ENCODE measurements at regions of chr3 and their contacts with region 1.

Region 1: GRCh38 chr3:56758539-56758981 is 43.2 kb downstream of the ARHGEF3 start:
- DNase-seq: peak in 1 of 2 donors; percentile 49
- ATAC-seq: peak; percentile 66 to 79 (median 74)
- H3K4me3 ChIP-seq: no peak overlapping the region
- H3K4me3 Mint-ChIP-seq: peak overlapping the region; percentile 65
- H3K27ac ChIP-seq: peak overlapping the region; percentile 67
- H3K27ac Mint-ChIP-seq: peak overlapping the region; percentile 99 to 100
- H3K4me1 ChIP-seq: peaks cover 76% of the 10 kb centered on the region
- H3K4me1 Mint-ChIP-seq: peaks cover 82 to 87% of the 10 kb centered on the region in 2 donors
- H3K27me3 ChIP-seq: no peaks in the 10 kb centered on the region
- H3K27me3 Mint-ChIP-seq: no peaks in the 10 kb centered on the region
- CTCF ChIP-seq: no peak

Region 2: DNA sequence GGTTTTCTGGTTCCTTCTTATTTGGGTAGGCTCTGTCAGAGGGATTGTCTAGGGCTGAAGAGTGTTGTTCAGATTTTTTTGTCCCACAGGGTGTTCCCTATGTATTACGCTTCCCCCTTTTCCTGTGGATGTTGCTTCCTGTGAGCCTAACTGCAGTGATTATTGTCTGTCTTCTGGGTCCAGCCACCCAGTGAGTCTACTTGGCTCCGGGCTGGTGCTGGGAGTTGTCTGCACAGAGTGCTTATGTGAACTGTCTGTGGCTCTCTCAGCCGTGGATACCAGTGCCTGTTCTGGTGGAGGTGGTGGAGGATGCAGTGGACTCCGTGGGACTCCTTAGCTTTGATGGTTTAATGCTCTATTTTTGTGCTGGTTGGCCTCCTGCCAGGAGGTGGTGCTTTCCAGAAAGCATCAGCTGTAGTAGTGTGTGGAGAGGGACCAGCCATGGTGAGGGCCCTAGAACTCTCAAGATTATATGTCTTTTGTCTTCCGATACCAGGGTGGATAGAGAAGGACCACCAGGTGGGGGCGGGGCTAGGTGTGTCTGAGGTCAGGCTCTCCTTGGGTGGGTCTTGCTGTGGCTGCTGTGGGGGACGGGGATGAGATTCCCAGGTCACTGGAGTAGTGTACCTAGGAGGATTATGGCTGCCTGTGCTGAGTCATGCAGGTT is 147.8 kb before region 1 on chr3:
- intact Hi-C with region 1: no loop called
- DNase-seq: no peak
- ATAC-seq: no peak
- H3K4me3 ChIP-seq: no peak overlapping the region
- H3K4me3 Mint-ChIP-seq: no peak overlapping the region
- H3K27ac ChIP-seq: no peak overlapping the region
- H3K27ac Mint-ChIP-seq: no peak overlapping the region
- H3K4me1 ChIP-seq: peaks cover 21% of the 10 kb centered on the region
- H3K4me1 Mint-ChIP-seq: peaks cover 34 to 37% of the 10 kb centered on the region in 2 donors
- H3K27me3 ChIP-seq: no peaks in the 10 kb centered on the region
- H3K27me3 Mint-ChIP-seq: no peaks in the 10 kb centered on the region
- CTCF ChIP-seq: no peak

Region 3: GRCh38 chr3:56790016-56790821 is 31.7 kb after region 1 on chr3:
- intact Hi-C with region 1: loop called (anchors 1 kb)
- DNase-seq: peak in 1 of 2 donors; percentile 73
- ATAC-seq: peak; percentile 60 to 80 (median 73)
- H3K4me3 ChIP-seq: no peak overlapping the region
- H3K4me3 Mint-ChIP-seq: peak overlapping the region; percentile 86
- H3K27ac ChIP-seq: peak overlapping the region; percentile 86
- H3K27ac Mint-ChIP-seq: peak overlapping the region; percentile 85 to 92
- H3K4me1 ChIP-seq: peaks cover 87% of the 10 kb centered on the region
- H3K4me1 Mint-ChIP-seq: peaks cover 88 to 91% of the 10 kb centered on the region in 2 donors
- H3K27me3 ChIP-seq: no peaks in the 10 kb centered on the region
- H3K27me3 Mint-ChIP-seq: no peaks in the 10 kb centered on the region
- CTCF ChIP-seq: no peak

Region 4: GRCh38 chr3:56796202-56796601 is 37.6 kb after region 1 on chr3:
- intact Hi-C with region 1: loop called (anchors 1 kb)
- DNase-seq: peak in 1 of 2 donors; percentile 47
- ATAC-seq: peak; percentile 36 to 48 (median 43)
- H3K4me3 ChIP-seq: no peak overlapping the region
- H3K4me3 Mint-ChIP-seq: peak overlapping the region; percentile 90
- H3K27ac ChIP-seq: peak overlapping the region; percentile 65
- H3K27ac Mint-ChIP-seq: peak overlapping the region; percentile 92
- H3K4me1 ChIP-seq: peaks cover 67% of the 10 kb centered on the region
- H3K4me1 Mint-ChIP-seq: peaks cover 77 to 86% of the 10 kb centered on the region in 2 donors
- H3K27me3 ChIP-seq: no peaks in the 10 kb centered on the region
- H3K27me3 Mint-ChIP-seq: no peaks in the 10 kb centered on the region
- CTCF ChIP-seq: no peak